ENCODE measurements at regions of chr9 and their contacts with region 1.

Region 1: GRCh38 chr9:129028192-129028957 is at the start of gene SH3GLB2:
- DNase-seq: peak in 8 of 9 donors; percentile 81 to 97 (median 88)
- ATAC-seq: peak; percentile 94
- H3K4me3 ChIP-seq: peak within 1 kb of the TSS; percentile 76
- H3K4me3 Mint-ChIP-seq: peak within 1 kb of the TSS; percentile 81 to 92 (median 83)
- H3K27ac ChIP-seq: peak within 1 kb of the TSS; percentile 72
- H3K27ac Mint-ChIP-seq: peak within 1 kb of the TSS; percentile 62 to 90 (median 78)
- H3K4me1 ChIP-seq: peaks cover 13 to 18% of the 10 kb centered on the region in 2 donors
- H3K4me1 Mint-ChIP-seq: peaks cover 13 to 37% (median 25%) of the 10 kb centered on the region in 7 donors
- H3K27me3 ChIP-seq: no peaks in the 10 kb centered on the region
- H3K27me3 Mint-ChIP-seq: no peaks in the 10 kb centered on the region
- total RNA-seq, gene SH3GLB2: 76.3 to 106 (median 86.2) TPM

Region 2: GRCh38 chr9:128829477-128830251 is 198.7 kb before region 1 on chr9 and contains the start of gene SPOUT1:
- CTCF ChIA-PET with region 1: no interaction called
- POLR2A ChIA-PET with region 1: no interaction called
- intact Hi-C with region 1: loop called in 1 of 2 experiments (anchors 1 kb)
- DNase-seq: peak; percentile 86 to 95 (median 92)
- ATAC-seq: peak; percentile 100
- H3K4me3 ChIP-seq: peak within 1 kb of the TSS; percentile 91
- H3K4me3 Mint-ChIP-seq: peak within 1 kb of the TSS; percentile 92 to 99 (median 95)
- H3K27ac ChIP-seq: peak within 1 kb of the TSS; percentile 81
- H3K27ac Mint-ChIP-seq: peak within 1 kb of the TSS; percentile 91 to 97 (median 94)
- H3K4me1 ChIP-seq: peaks cover 8 to 15% of the 10 kb centered on the region in 2 donors
- H3K4me1 Mint-ChIP-seq: peaks cover 14 to 26% (median 19%) of the 10 kb centered on the region in 7 donors
- H3K27me3 ChIP-seq: no peaks in the 10 kb centered on the region
- H3K27me3 Mint-ChIP-seq: no peaks in the 10 kb centered on the region
- total RNA-seq, gene SPOUT1: 38.9 to 83.6 (median 65.2) TPM

Measured in naive thymus-derived CD4-positive, alpha-beta T cell (primary cell).